ENCODE measurements at regions of chr1 and their contacts with region 1.

Region 1: DNA sequence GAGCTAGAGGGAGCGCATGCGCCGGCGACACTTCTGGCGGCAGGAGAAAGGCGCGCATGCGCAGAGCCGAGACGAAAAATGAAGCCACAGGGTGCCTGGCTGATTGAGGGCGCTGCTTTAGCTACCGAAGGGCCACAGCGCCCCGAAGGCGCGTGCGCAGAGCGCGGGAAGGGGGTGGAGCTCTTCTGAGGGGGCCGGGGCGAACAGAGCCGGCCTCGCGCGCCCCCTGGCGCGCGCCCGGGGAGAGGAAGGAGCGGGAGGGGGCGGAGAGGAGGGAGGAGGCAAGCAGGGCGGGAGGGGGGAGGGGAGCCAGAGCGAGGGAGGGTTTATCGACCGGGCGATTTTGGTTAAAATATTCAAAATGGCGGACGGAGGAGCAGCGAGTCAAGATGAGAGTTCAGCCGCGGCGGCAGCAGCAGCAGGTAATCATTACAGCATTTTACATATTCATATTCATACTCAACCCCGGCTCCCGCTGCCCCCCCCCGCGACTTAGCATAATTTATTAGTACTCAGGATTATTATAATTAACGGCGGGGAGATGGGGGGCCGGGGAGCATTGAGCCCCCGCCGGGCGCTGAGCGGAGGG is at the start of gene POU2F1:
- DNase-seq: peak; percentile 98 to 99 (median 98)
- H3K4me3 ChIP-seq: peak within 1 kb of the TSS; percentile 55 to 99
- H3K4me3 Mint-ChIP-seq: peak within 1 kb of the TSS; percentile 90 to 99 (median 94)
- H3K27ac ChIP-seq: peak within 1 kb of the TSS; percentile 90
- H3K27ac Mint-ChIP-seq: peak within 1 kb of the TSS; percentile 89 to 99 (median 97)
- H3K4me1 ChIP-seq: peaks cover 22% of the 10 kb centered on the region
- H3K4me1 Mint-ChIP-seq: peaks cover 19 to 47% (median 35%) of the 10 kb centered on the region in 4 donors
- H3K27me3 ChIP-seq: no peaks in the 10 kb centered on the region
- H3K27me3 Mint-ChIP-seq: no peaks in the 10 kb centered on the region
- total RNA-seq, gene POU2F1: 17.9 to 22.9 TPM

Region 2: DNA sequence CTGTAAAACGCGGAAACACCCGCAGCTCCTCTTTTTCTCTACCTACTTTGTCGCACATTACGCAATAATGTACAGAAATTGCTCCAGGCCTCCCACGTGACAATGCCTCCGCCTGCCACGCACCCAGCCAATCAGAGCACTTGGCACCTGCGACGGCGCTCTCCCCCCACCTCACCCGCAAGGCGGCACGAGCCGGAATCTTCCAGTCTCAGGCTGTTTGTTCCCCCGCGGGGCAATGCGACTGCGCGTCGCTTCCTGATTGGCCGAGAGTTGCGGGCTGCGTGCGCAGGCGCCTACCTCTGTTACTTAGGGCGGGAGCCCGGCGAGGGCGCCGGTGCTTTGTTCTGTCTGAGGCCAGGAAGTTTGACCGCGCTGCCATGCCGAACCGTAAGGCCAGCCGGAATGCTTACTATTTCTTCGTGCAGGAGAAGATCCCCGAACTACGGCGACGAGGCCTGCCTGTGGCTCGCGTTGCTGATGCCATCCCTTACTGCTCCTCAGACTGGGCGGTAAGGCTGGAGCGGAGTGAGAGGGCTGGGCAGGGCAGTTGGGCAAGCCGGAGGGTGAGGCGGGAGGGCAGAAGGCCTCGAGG is 231.6 kb before region 1 on chr1 and contains the start of gene MAEL:
- CTCF ChIA-PET with region 1: no interaction called
- POLR2A ChIA-PET with region 1: no interaction called
- intact Hi-C with region 1: no loop called
- DNase-seq: no peak
- H3K4me3 ChIP-seq: no peak within 1 kb of the TSS
- H3K4me3 Mint-ChIP-seq: no peak within 1 kb of the TSS
- H3K27ac ChIP-seq: no peak within 1 kb of the TSS
- H3K27ac Mint-ChIP-seq: no peak within 1 kb of the TSS
- H3K4me1 ChIP-seq: no peaks in the 10 kb centered on the region
- H3K4me1 Mint-ChIP-seq: no peaks in the 10 kb centered on the region
- H3K27me3 ChIP-seq: no peaks in the 10 kb centered on the region
- H3K27me3 Mint-ChIP-seq: peaks cover 5 to 11% of the 10 kb centered on the region in 2 donors
- total RNA-seq, gene MAEL: not detected

Region 3: GRCh38 chr1:167066333-167067122 is 154.1 kb before region 1 on chr1:
- CTCF ChIA-PET with region 1: interaction called, 29 read pairs
- POLR2A ChIA-PET with region 1: interaction called, 5 read pairs
- intact Hi-C with region 1: loop called (anchors 1 kb)
- DNase-seq: peak; percentile 66 to 79 (median 72)
- H3K4me3 ChIP-seq: no peak overlapping the region
- H3K4me3 Mint-ChIP-seq: peak overlapping the region in 2 of 8 donors; percentile 51 to 58
- H3K27ac ChIP-seq: no peak overlapping the region
- H3K27ac Mint-ChIP-seq: peak overlapping the region in 1 of 7 donors; percentile 85
- H3K4me1 ChIP-seq: no peaks in the 10 kb centered on the region
- H3K4me1 Mint-ChIP-seq: peaks cover 0 to 2% (median under 1%) of the 10 kb centered on the region in 4 donors
- H3K27me3 ChIP-seq: no peaks in the 10 kb centered on the region
- H3K27me3 Mint-ChIP-seq: no peaks in the 10 kb centered on the region

Region 4: GRCh38 chr1:167263819-167264464 is 43.3 kb after region 1 on chr1:
- CTCF ChIA-PET with region 1: interaction called, 15 read pairs
- POLR2A ChIA-PET with region 1: interaction called, 11 read pairs
- intact Hi-C with region 1: loop called (anchors 2 kb)
- DNase-seq: peak in 2 of 5 donors; percentile 4 to 8
- H3K4me3 ChIP-seq: no peak overlapping the region
- H3K4me3 Mint-ChIP-seq: no peak overlapping the region
- H3K27ac ChIP-seq: no peak overlapping the region
- H3K27ac Mint-ChIP-seq: no peak overlapping the region
- H3K4me1 ChIP-seq: peaks cover 45% of the 10 kb centered on the region
- H3K4me1 Mint-ChIP-seq: peaks cover 17 to 27% (median 19%) of the 10 kb centered on the region in 4 donors
- H3K27me3 ChIP-seq: no peaks in the 10 kb centered on the region
- H3K27me3 Mint-ChIP-seq: no peaks in the 10 kb centered on the region

Region 5: GRCh38 chr1:167454894-167455785 is 234.5 kb after region 1 on chr1:
- CTCF ChIA-PET with region 1: interaction called, 3 read pairs
- POLR2A ChIA-PET with region 1: interaction called, 19 read pairs
- intact Hi-C with region 1: loop called (anchors 2 kb)
- DNase-seq: peak; percentile 81 to 92 (median 84)
- H3K4me3 ChIP-seq: peak overlapping the region; percentile 29 to 85
- H3K4me3 Mint-ChIP-seq: peak overlapping the region; percentile 70 to 88 (median 86)
- H3K27ac ChIP-seq: peak overlapping the region; percentile 88
- H3K27ac Mint-ChIP-seq: peak overlapping the region; percentile 51 to 98 (median 91)
- H3K4me1 ChIP-seq: peaks cover 83% of the 10 kb centered on the region
- H3K4me1 Mint-ChIP-seq: peaks cover 58 to 82% (median 63%) of the 10 kb centered on the region in 4 donors
- H3K27me3 ChIP-seq: no peaks in the 10 kb centered on the region
- H3K27me3 Mint-ChIP-seq: no peaks in the 10 kb centered on the region

Region 6: GRCh38 chr1:167542109-167543032 is 321.7 kb after region 1 on chr1:
- CTCF ChIA-PET with region 1: interaction called, 12 read pairs
- POLR2A ChIA-PET with region 1: interaction called, 3 read pairs
- intact Hi-C with region 1: no loop called
- DNase-seq: no peak
- H3K4me3 ChIP-seq: no peak overlapping the region
- H3K4me3 Mint-ChIP-seq: peak overlapping the region in 1 of 8 donors; percentile 33
- H3K27ac ChIP-seq: no peak overlapping the region
- H3K27ac Mint-ChIP-seq: peak overlapping the region in 5 of 7 donors; percentile 1 to 64 (median 32)
- H3K4me1 ChIP-seq: peaks cover 6% of the 10 kb centered on the region
- H3K4me1 Mint-ChIP-seq: peaks cover 9 to 19% (median 16%) of the 10 kb centered on the region in 4 donors
- H3K27me3 ChIP-seq: no peaks in the 10 kb centered on the region
- H3K27me3 Mint-ChIP-seq: no peaks in the 10 kb centered on the region

Region 7: GRCh38 chr1:167715157-167715999 is 494.7 kb after region 1 on chr1:
- CTCF ChIA-PET with region 1: interaction called, 4 read pairs
- POLR2A ChIA-PET with region 1: interaction called, 5 read pairs
- intact Hi-C with region 1: loop called (anchors 1 kb)
- DNase-seq: peak; percentile 87 to 91 (median 88)
- H3K4me3 ChIP-seq: peak overlapping the region; percentile 80 to 87
- H3K4me3 Mint-ChIP-seq: peak overlapping the region; percentile 84 to 98 (median 92)
- H3K27ac ChIP-seq: peak overlapping the region; percentile 39
- H3K27ac Mint-ChIP-seq: peak overlapping the region; percentile 90 to 99 (median 94)
- H3K4me1 ChIP-seq: peaks cover 31% of the 10 kb centered on the region
- H3K4me1 Mint-ChIP-seq: peaks cover 19 to 49% (median 38%) of the 10 kb centered on the region in 4 donors
- H3K27me3 ChIP-seq: no peaks in the 10 kb centered on the region
- H3K27me3 Mint-ChIP-seq: peaks cover 4 to 12% of the 10 kb centered on the region in 2 donors